T-cell (primary cell): ENCODE measurements at regions of chr3 and their contacts with region 1.

Region 1: DNA sequence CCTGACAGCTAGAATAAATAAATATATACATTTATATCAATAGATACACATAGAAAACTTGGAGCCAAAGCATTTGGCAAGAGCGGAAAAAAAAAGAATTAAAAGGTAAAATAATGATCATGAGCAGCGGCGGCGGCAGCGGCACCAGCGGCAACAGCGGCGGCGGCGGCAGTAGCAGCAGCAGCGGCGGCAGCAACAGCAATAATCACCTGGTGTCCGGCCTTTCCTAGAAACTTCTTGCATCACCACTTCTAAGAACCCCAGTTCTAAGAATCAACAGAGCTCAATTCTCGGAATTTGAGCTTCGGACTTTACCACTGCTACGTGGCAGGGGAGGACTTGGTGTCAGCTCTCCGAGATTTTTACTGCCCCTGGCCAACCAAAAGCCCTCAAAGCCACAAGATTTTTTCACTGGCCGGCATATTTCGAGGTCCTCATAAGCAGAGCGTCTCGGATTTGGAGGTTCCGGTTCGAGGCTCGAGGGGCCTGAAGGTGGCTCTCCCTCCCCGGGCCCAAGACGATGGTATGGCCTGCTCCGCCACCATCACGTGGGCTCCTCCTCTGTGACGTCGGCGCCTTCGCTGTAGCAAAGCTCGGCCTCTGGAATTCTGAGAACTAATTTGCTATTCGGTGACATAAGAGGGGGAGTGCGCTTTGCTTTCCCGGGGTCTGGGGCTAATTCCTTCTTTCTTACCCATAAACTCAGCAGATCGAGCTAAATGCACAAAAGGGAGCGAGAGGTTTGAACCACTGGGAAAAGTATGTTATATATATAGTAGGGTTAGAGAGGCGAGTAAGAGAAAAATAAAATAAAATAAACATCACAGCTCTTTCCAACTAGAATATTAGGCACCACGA is at the start of gene BCL6:
- DNase-seq: peak; percentile 71 to 95 (median 84)
- ATAC-seq: peak; percentile 62 to 70 (median 68)
- H3K4me3 ChIP-seq: peak within 1 kb of the TSS; percentile 83 to 93
- H3K4me3 Mint-ChIP-seq: peak within 1 kb of the TSS; percentile 95 to 98 (median 98)
- H3K27ac ChIP-seq: peak within 1 kb of the TSS; percentile 98
- H3K27ac Mint-ChIP-seq: peak within 1 kb of the TSS; percentile 100
- H3K4me1 ChIP-seq: peaks cover 37 to 42% of the 10 kb centered on the region in 2 experiments
- H3K4me1 Mint-ChIP-seq: peaks cover 70 to 99% (median 75%) of the 10 kb centered on the region in 3 donors
- H3K27me3 ChIP-seq: no peaks in the 10 kb centered on the region
- H3K27me3 Mint-ChIP-seq: peaks cover 0 to 3% of the 10 kb centered on the region in 2 donors
- total RNA-seq, gene BCL6: 16.8 to 31.1 (median 27.7) TPM

Region 2: DNA sequence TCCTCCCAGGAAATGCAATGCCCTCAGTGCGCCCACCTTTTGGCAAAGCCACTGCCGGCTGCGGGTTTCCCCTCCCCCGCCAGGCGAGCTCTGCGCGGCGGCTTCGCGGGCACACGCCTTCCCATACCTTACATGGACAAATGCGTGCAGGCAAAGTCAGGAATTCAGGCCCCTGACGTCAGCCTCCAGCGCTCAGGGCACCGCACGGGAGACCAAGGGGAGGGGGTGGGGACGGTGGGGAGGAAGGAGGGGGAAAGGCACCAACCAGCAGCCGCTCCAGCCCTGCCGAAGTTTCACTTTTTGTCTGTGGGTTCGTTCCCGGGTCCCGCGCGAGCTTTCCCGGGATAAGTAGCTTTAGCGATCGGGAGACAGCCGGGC is 408.2 kb after region 1 on chr3:
- CTCF ChIA-PET with region 1: interaction called, 5 to 7 read pairs
- POLR2A ChIA-PET with region 1: interaction called in 1 of 2 experiments, 10 read pairs
- DNase-seq: peak in 22 of 35 experiments; percentile 4 to 77 (median 20)
- ATAC-seq: peak; percentile 26 to 37 (median 30)
- H3K4me3 ChIP-seq: peak overlapping the region; percentile 67 to 81
- H3K4me3 Mint-ChIP-seq: peak overlapping the region; percentile 89
- H3K27ac ChIP-seq: peak overlapping the region; percentile 50
- H3K27ac Mint-ChIP-seq: peak overlapping the region; percentile 85
- H3K4me1 ChIP-seq: peaks cover 21 to 38% of the 10 kb centered on the region in 2 experiments
- H3K4me1 Mint-ChIP-seq: peaks cover 52 to 64% (median 64%) of the 10 kb centered on the region in 3 donors
- H3K27me3 ChIP-seq: no peaks in the 10 kb centered on the region
- H3K27me3 Mint-ChIP-seq: no peaks in the 10 kb centered on the region

Region 3: GRCh38 chr3:188341501-188341900 is 596.1 kb after region 1 on chr3:
- CTCF ChIA-PET with region 1: interaction called in 1 of 2 experiments, 3 read pairs
- POLR2A ChIA-PET with region 1: interaction called, 3 to 12 read pairs
- DNase-seq: no peak
- ATAC-seq: no peak
- H3K4me3 ChIP-seq: no peak overlapping the region
- H3K4me3 Mint-ChIP-seq: no peak overlapping the region
- H3K27ac ChIP-seq: no peak overlapping the region
- H3K27ac Mint-ChIP-seq: no peak overlapping the region
- H3K4me1 ChIP-seq: peaks cover 6 to 7% of the 10 kb centered on the region in 2 experiments
- H3K4me1 Mint-ChIP-seq: peaks cover 28 to 39% (median 32%) of the 10 kb centered on the region in 3 donors
- H3K27me3 ChIP-seq: no peaks in the 10 kb centered on the region
- H3K27me3 Mint-ChIP-seq: no peaks in the 10 kb centered on the region

Region 4: DNA sequence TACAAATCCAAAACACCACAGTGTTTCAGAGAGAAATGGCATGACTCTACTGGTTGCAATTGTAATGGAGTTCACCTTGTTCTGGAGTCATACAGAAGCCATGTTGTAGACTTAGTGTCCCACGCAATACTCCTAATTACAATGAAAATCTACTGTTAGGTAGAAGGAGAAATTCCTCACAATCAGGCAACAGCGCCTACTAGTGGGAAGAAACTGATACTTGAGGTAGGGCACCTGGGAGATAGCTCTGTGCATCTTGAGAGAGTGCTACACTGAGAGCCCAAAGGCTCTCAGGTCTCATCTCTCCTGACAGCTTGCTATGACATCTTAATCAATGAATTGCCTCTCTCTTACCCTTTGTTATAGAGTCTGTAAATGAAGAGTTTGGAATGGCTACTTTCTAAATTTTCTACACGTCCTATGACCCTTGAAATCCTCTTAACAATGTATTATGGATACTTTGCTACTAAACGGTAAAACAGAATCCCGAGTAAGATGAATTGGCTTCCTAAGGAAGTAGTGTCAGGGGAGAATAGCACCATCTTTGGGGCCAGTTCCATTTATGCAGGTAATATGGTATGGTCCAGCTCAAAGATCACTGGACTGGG is 1003.7 kb after region 1 on chr3:
- CTCF ChIA-PET with region 1: interaction called, 13 to 111 read pairs
- POLR2A ChIA-PET with region 1: interaction called in 1 of 2 experiments, 3 read pairs
- DNase-seq: peak in 33 of 35 experiments; percentile 8 to 81 (median 42)
- ATAC-seq: peak; percentile 73 to 76 (median 74)
- H3K4me3 ChIP-seq: no peak overlapping the region
- H3K4me3 Mint-ChIP-seq: no peak overlapping the region
- H3K27ac ChIP-seq: no peak overlapping the region
- H3K27ac Mint-ChIP-seq: no peak overlapping the region
- H3K4me1 ChIP-seq: no peaks in the 10 kb centered on the region
- H3K4me1 Mint-ChIP-seq: peaks cover 0 to 10% (median 0%) of the 10 kb centered on the region in 3 donors
- H3K27me3 ChIP-seq: no peaks in the 10 kb centered on the region
- H3K27me3 Mint-ChIP-seq: no peaks in the 10 kb centered on the region

Region 5: GRCh38 chr3:188954590-188955208 is 1209.3 kb after region 1 on chr3:
- CTCF ChIA-PET with region 1: interaction called, 165 to 377 read pairs
- POLR2A ChIA-PET with region 1: interaction called in 1 of 2 experiments, 3 read pairs
- DNase-seq: peak; percentile 25 to 84 (median 58)
- ATAC-seq: peak; percentile 64 to 82 (median 76)
- H3K4me3 ChIP-seq: no peak overlapping the region
- H3K4me3 Mint-ChIP-seq: no peak overlapping the region
- H3K27ac ChIP-seq: no peak overlapping the region
- H3K27ac Mint-ChIP-seq: no peak overlapping the region
- H3K4me1 ChIP-seq: no peaks in the 10 kb centered on the region
- H3K4me1 Mint-ChIP-seq: peaks cover 0 to 7% (median 5%) of the 10 kb centered on the region in 3 donors
- H3K27me3 ChIP-seq: no peaks in the 10 kb centered on the region
- H3K27me3 Mint-ChIP-seq: no peaks in the 10 kb centered on the region

Region 6: GRCh38 chr3:189041482-189042090 is 1296.2 kb after region 1 on chr3:
- CTCF ChIA-PET with region 1: interaction called, 29 to 135 read pairs
- POLR2A ChIA-PET with region 1: interaction called in 1 of 2 experiments, 10 read pairs
- DNase-seq: peak; percentile 44 to 86 (median 66)
- ATAC-seq: peak; percentile 98 to 100 (median 100)
- H3K4me3 ChIP-seq: no peak overlapping the region
- H3K4me3 Mint-ChIP-seq: no peak overlapping the region
- H3K27ac ChIP-seq: peak overlapping the region; percentile 55
- H3K27ac Mint-ChIP-seq: peak overlapping the region; percentile 79 to 83
- H3K4me1 ChIP-seq: peaks cover 2 to 5% of the 10 kb centered on the region in 2 experiments
- H3K4me1 Mint-ChIP-seq: peaks cover 9 to 14% (median 13%) of the 10 kb centered on the region in 3 donors
- H3K27me3 ChIP-seq: no peaks in the 10 kb centered on the region
- H3K27me3 Mint-ChIP-seq: no peaks in the 10 kb centered on the region

Region 7: DNA sequence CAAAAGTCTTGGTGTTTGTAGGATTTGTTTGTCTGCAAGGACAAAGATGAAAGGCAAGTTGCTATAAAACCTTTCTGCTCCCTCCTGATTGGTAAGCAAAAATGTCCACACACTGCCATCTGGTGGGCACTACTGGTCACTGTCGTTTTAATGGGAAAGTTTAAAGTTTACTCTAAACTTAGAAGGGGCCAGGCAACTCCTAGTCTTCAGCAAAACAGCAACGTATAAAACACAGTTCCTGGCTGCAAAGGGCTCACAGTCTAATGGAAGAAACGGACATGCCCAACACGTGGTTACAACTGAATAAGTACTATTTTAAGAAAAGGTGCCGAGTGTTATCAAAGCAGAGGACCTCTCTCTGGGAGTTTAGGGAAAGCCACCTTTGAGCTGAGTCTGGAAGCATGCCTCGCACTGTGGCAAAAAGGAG is 1402.7 kb after region 1 on chr3:
- CTCF ChIA-PET with region 1: interaction called, 16 to 81 read pairs
- POLR2A ChIA-PET with region 1: interaction called in 1 of 2 experiments, 13 read pairs
- DNase-seq: peak; percentile 19 to 84 (median 60)
- ATAC-seq: peak; percentile 55 to 75 (median 62)
- H3K4me3 ChIP-seq: no peak overlapping the region
- H3K4me3 Mint-ChIP-seq: no peak overlapping the region
- H3K27ac ChIP-seq: no peak overlapping the region
- H3K27ac Mint-ChIP-seq: peak overlapping the region in 1 of 2 donors; percentile 21
- H3K4me1 ChIP-seq: peaks cover 3 to 6% of the 10 kb centered on the region in 2 experiments
- H3K4me1 Mint-ChIP-seq: peaks cover 12 to 25% (median 22%) of the 10 kb centered on the region in 3 donors
- H3K27me3 ChIP-seq: no peaks in the 10 kb centered on the region
- H3K27me3 Mint-ChIP-seq: no peaks in the 10 kb centered on the region